ENCODE measurements at regions of chr10 and their contacts with region 1.

Region 1: DNA sequence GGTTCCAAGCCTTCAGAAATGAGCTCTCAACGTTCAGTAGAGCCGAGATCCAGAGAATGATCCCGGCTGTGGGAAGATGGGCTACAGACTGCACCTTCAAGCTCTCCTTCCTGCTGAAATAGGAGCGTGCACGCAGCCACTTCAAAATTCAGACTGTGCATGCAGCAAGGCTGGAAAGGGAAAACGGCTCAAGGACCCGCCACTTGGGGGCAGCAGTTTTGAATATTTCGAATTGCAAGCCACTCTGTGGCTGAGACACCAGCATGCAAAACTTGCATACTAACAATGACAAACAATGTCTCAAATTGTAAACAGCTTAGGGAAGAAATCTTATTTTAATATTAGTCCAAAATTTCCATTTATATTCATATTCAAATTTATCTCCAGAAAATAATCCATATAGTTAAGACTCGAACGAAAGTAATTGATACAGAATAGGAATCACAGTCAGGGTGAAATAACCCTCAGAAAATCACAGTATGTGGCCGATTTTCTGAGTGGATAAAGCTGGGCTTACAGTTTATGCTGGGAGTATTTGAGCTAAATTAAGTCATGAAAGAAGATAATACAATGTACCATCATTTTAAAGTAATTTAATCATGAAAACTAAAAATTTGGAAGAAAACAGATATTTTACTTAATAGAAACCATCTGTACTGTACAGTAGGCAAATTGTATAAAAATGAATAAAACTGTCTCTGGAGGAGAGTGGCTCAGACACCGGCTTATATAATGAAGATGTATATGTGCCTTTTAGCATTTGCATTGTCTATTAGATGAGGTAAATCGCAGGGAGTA is 137.9 kb upstream of the MKI67 start:
- DNase-seq: peak; percentile 25
- ATAC-seq: peak; percentile 85
- H3K4me3 ChIP-seq: no peak overlapping the region
- H3K27ac ChIP-seq: no peak overlapping the region
- H3K4me1 ChIP-seq: no peaks in the 10 kb centered on the region
- H3K27me3 ChIP-seq: no peaks in the 10 kb centered on the region
- CTCF ChIP-seq: peak; percentile 45
- POLR2A ChIP-seq: no peak
- RAD21 ChIP-seq: peak; percentile 34; the same call in 1 of the 2 replicates

Region 2: DNA sequence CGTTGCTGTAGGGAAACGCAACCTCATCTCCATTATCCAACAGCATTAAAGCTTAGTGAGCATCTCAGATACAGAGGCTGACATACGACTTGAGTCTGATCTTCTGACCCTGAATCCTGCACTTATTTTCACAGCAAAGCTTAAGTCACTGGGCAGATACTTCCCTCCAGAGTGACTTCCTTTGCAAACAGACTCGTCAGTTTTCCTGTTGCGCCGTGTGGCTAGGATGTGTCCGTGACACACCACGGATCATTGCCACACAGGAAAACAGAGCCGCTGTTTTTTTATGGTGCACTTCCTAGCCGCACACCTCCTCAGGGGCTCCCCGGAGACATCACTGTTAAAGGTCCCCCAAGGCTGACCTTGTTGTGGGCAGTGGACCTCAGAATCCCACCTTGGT is 43.0 kb before region 1 on chr10:
- CTCF ChIA-PET with region 1: no interaction called
- POLR2A ChIA-PET with region 1: no interaction called
- dilution Hi-C with region 1: no loop called
- in situ Hi-C with region 1: no loop called
- intact Hi-C with region 1: no loop called
- DNase-seq: no peak
- ATAC-seq: no peak
- H3K4me3 ChIP-seq: no peak overlapping the region
- H3K27ac ChIP-seq: no peak overlapping the region
- H3K4me1 ChIP-seq: no peaks in the 10 kb centered on the region
- H3K27me3 ChIP-seq: no peaks in the 10 kb centered on the region
- CTCF ChIP-seq: no peak
- POLR2A ChIP-seq: no peak
- RAD21 ChIP-seq: no peak

Region 3: DNA sequence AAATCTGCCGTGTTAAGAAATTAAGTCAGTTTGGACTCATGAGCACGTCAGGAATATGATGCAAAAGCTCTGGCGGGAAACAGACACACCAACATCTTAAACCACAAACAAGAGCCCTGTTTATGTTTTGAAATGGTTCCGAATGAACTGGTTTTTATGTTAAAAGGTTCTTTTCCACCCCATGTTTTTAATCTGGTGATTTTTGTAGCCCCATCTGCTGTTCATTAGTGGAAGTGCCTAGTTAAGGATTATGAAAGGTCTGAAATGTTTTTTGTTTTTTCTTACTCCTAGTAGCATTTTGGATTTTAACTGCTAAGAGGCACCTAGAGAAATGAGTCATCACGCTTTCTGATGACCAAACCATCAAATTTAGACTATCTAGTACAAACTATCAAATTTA is 266.2 kb after region 1 on chr10:
- CTCF ChIA-PET with region 1: no interaction called
- POLR2A ChIA-PET with region 1: no interaction called
- dilution Hi-C with region 1: no loop called
- in situ Hi-C with region 1: no loop called
- intact Hi-C with region 1: loop called (anchors 10 kb)
- DNase-seq: no peak
- ATAC-seq: no peak
- H3K4me3 ChIP-seq: no peak overlapping the region
- H3K27ac ChIP-seq: no peak overlapping the region
- H3K4me1 ChIP-seq: no peaks in the 10 kb centered on the region
- H3K27me3 ChIP-seq: no peaks in the 10 kb centered on the region
- CTCF ChIP-seq: peak; percentile 11; the same call in 1 of the 2 replicates
- POLR2A ChIP-seq: no peak
- RAD21 ChIP-seq: no peak

Region 4: DNA sequence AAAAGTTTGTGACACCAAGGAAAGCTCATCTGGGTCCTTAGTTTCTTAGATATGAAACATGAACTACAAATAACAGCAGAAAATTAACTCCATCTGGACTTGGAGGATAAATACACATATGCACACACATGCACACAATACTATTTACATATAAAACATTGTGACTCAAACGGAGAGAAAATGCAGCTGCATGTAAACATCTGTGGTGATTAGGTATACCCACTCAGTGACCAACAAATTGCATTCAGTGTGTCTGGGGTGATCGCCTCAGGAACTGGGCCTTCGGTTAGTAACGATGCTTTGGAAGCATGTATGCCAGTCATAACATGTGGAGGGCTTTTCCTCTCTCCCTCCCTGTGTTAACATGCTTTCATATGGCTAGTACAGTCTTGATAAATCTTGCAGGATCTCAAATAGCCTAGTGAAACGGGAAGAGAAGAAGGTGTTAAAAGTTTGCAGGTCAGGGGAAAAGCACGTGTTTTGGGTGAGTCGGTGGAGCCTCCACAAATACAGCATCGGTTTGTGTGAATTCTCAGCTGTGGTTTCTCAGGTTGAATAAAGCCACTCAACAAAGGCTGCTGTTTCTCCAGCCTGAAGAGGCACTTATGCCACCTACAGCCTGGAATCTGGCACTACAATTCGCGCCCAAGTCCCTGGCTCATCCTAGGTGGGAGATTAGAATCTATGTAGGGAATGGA is 1863.4 kb after region 1 on chr10:
- CTCF ChIA-PET with region 1: no interaction called
- POLR2A ChIA-PET with region 1: no interaction called
- dilution Hi-C with region 1: no loop called
- in situ Hi-C with region 1: no loop called
- intact Hi-C with region 1: loop called (anchors 5 kb)
- DNase-seq: peak; percentile 70
- ATAC-seq: peak; percentile 99; the same call in 1 of the 2 replicates
- H3K4me3 ChIP-seq: no peak overlapping the region
- H3K27ac ChIP-seq: no peak overlapping the region
- H3K4me1 ChIP-seq: peaks cover 2% of the 10 kb centered on the region; the same call in 1 of the 2 replicates
- H3K27me3 ChIP-seq: peaks cover 8% of the 10 kb centered on the region; the same call in 1 of the 2 replicates
- CTCF ChIP-seq: peak; percentile 83
- POLR2A ChIP-seq: no peak
- RAD21 ChIP-seq: peak; percentile 74

Measured in IMR-90 (cell line).